PC-9 (cell line): ENCODE measurements at regions of chr5 and their contacts with region 1.

Region 1: GRCh38 chr5:113162770-113163169 is 186.2 kb downstream of the DCP2 start:
- DNase-seq: peak; percentile 28 to 84
- H3K4me3 ChIP-seq: no peak overlapping the region
- H3K27ac ChIP-seq: peak overlapping the region; percentile 64
- H3K4me1 ChIP-seq: peaks cover 25% of the 10 kb centered on the region
- H3K27me3 ChIP-seq: no peaks in the 10 kb centered on the region
- CTCF ChIP-seq: no peak

Region 2: GRCh38 chr5:112479407-112479806 is 683.4 kb before region 1 on chr5:
- CTCF ChIA-PET with region 1: no interaction called
- POLR2A ChIA-PET with region 1: no interaction called
- intact Hi-C with region 1: loop called (anchors 5 kb)
- DNase-seq: peak; percentile 50 to 51
- H3K4me3 ChIP-seq: no peak overlapping the region
- H3K27ac ChIP-seq: no peak overlapping the region
- H3K4me1 ChIP-seq: no peaks in the 10 kb centered on the region
- H3K27me3 ChIP-seq: no peaks in the 10 kb centered on the region
- CTCF ChIP-seq: no peak